ENCODE measurements at regions of chr9 and their contacts with region 1.

Region 1: GRCh38 chr9:116494815-116495634 is 192.1 kb upstream of the TRIM32 start:
- DNase-seq: peak; percentile 44
- H3K4me3 Mint-ChIP-seq: no peak overlapping the region
- H3K27ac Mint-ChIP-seq: no peak overlapping the region
- H3K4me1 Mint-ChIP-seq: no peaks in the 10 kb centered on the region
- H3K27me3 Mint-ChIP-seq: no peaks in the 10 kb centered on the region

Region 2: GRCh38 chr9:116020801-116021200 is 474.2 kb before region 1 on chr9:
- CTCF ChIA-PET with region 1: no interaction called
- POLR2A ChIA-PET with region 1: no interaction called
- intact Hi-C with region 1: no loop called
- DNase-seq: no peak
- H3K4me3 Mint-ChIP-seq: no peak overlapping the region
- H3K27ac Mint-ChIP-seq: no peak overlapping the region
- H3K4me1 Mint-ChIP-seq: no peaks in the 10 kb centered on the region
- H3K27me3 Mint-ChIP-seq: no peaks in the 10 kb centered on the region

Region 3: DNA sequence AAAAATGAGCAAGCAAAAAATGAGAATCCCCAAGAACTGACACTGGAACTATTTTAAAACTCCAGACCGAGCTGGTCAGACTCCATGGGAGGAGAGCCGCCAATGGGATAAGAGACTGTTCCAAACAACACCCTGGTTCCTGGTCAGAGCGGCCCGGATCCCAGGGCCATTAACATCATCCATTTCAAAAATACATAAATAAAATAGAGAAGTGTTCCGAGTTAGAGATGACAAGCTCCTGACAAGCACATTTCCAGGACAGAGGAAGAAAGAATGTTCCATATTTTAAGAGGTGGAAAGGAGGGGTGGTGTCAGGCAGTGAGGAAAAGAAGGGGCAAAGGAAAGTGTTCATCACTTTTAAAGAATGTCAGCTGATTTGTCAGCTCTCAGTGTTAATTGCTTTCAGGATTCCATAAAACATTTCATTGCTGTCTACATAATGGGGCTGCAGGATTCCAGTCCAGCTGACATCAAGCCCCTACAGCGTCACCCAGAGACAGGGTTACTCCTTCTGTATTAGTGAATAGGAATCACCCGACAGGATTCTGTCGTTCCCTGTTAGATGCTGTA is 10.4 kb before region 1 on chr9:
- CTCF ChIA-PET with region 1: interaction called, 14 read pairs
- POLR2A ChIA-PET with region 1: no interaction called
- intact Hi-C with region 1: no loop called
- DNase-seq: no peak
- H3K4me3 Mint-ChIP-seq: no peak overlapping the region
- H3K27ac Mint-ChIP-seq: no peak overlapping the region
- H3K4me1 Mint-ChIP-seq: no peaks in the 10 kb centered on the region
- H3K27me3 Mint-ChIP-seq: no peaks in the 10 kb centered on the region